Motor neuron (in vitro differentiated cells): ENCODE measurements at regions of chr2 and their contacts with region 1.

Region 1: DNA sequence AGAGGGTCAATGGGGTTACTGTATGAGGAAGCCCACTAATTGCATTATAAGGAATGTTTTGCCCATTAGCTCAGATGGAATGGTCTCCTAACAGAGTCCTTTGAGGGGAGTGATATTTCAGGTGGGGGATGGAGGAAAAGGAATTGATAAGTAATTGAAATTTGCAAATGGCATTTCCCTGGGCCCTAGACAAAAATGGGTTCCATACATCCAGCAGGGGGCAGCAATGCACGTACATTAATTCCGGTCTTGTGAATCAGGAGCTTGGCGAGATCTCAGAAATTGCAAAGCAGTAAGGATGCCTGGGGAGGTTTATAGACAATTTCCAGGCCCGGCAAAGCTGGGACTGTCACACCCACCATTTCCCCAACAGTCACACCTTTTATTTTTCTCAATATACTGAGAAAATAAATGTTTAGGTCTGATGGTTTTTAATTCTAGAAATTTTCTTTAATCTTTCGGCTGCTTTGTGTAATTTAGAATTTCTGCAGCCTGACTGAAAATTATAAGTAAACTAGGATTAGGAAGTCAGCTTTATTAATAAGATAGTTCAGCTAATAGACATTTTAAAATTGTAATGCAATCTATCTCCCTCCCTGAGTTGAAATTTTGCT is 122.8 kb downstream of the LYPD1 start:
- ATAC-seq: peak; percentile 28 to 87 (median 48)
- H3K4me3 ChIP-seq: no peak overlapping the region
- H3K27ac ChIP-seq: no peak overlapping the region
- H3K4me1 ChIP-seq: peaks cover 25 to 27% of the 10 kb centered on the region in 2 donors

Region 2: GRCh38 chr2:132632000-132632649 is 84.9 kb after region 1 on chr2:
- in situ Hi-C with region 1: no loop called
- ATAC-seq: peak; percentile 35 to 93 (median 86)
- H3K4me3 ChIP-seq: no peak overlapping the region
- H3K27ac ChIP-seq: peak overlapping the region; percentile 28 to 61
- H3K4me1 ChIP-seq: peaks cover 16 to 30% of the 10 kb centered on the region in 2 donors

Region 3: DNA sequence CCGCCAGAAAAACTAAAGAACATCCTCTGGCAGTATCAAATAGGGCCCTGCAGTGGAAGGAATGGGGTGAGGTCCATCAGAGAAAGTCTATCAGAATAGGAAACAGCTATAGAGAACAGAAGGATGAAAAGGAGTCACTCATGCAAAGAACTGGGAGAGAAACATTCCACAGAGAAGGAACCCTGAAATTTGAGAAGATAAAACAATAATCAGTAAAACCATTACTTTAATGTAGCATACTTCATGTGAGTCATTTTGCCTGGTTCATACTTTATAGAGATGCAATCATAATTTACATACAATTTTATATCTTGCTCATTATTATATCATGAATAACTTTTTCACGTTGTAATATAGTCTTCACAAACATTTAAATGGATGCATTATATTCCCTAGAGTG is 618.9 kb after region 1 on chr2:
- in situ Hi-C with region 1: loop called in 3 of 9 experiments (anchors 10 to 25 kb)
- ATAC-seq: no peak
- H3K4me3 ChIP-seq: no peak overlapping the region
- H3K27ac ChIP-seq: no peak overlapping the region
- H3K4me1 ChIP-seq: peaks cover 5 to 23% of the 10 kb centered on the region in 2 donors

Region 4: GRCh38 chr2:133171393-133172004 is 624.3 kb after region 1 on chr2:
- in situ Hi-C with region 1: loop called in 3 of 9 experiments (anchors 10 to 25 kb)
- ATAC-seq: peak; percentile 49 to 73 (median 58)
- H3K4me3 ChIP-seq: no peak overlapping the region
- H3K27ac ChIP-seq: no peak overlapping the region
- H3K4me1 ChIP-seq: peaks cover 5 to 29% of the 10 kb centered on the region in 2 donors

Region 5: DNA sequence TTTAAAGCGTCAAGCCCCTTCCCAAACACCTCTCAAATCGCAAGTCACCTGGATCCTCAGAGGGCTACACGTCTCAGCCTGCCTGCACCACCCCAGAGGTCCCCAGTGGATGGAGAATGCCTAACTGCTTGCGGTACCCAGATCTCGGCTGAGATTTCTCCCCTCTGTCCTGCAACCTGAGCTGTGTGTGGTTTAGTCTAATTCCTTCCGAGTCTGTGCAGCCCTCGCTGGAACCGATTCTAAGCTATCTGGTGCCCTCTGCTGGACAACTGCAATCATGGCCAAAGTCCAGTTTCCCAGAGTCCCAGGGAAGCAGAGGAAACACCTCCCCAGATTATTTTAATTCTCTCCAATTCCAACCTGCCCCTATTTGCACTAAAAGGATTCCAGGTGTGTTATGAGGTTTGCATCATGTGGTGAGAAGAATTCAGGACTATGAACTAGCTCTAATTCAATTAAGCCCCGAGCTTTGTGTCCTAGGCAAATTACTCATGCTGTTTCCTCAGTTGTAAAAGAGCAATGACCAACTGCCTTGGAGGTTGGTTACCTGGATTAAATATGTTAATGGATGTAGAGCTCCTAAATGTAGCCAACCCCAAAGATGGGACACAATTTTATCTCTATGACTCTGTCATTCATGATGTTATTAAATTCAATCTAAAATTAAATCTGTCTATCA is 1297.2 kb after region 1 on chr2:
- in situ Hi-C with region 1: loop called in 1 of 9 experiments (anchors 25 kb)
- ATAC-seq: peak; percentile 65 to 97 (median 78)
- H3K4me3 ChIP-seq: no peak overlapping the region
- H3K27ac ChIP-seq: no peak overlapping the region
- H3K4me1 ChIP-seq: peaks cover 7 to 21% of the 10 kb centered on the region in 2 donors